AG04450 (cell line): ENCODE measurements at regions of chr1 and their contacts with region 1.

Region 1: DNA sequence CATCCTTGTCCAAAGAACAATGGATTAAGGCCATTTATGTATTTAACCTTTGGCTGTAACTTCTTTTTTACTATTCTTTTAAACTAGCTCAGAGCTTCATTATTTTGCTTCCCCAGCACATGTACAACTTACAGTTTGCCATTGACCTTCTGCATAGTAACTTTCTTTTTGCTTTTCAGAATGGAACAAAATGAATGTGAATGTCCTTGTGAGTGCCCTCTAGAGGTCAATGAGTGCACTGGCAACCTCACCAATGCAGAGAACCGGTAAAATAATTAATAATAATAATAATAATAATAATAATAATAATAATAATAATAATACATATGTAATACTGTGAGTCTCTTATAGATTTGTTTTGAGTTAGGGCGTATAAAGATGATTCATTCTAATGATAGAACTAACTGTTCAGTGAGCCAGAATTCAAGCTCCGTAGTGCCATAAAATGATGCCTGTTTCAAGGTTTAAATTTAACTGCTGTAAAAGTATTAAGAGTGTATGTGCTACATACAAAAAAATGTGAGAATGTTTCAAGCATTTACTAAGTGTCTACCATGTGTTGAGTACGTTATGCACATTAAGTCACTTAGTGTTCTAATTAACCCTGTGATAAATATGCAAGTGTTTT is 69.0 kb upstream of the RAVER2 start:
- DNase-seq: no peak
- H3K4me3 ChIP-seq: no peak overlapping the region
- H3K27ac ChIP-seq: no peak overlapping the region
- H3K27me3 ChIP-seq: no peaks in the 10 kb centered on the region
- CTCF ChIP-seq: peak; percentile 73

Region 2: GRCh38 chr1:64268653-64269557 is 406.9 kb before region 1 on chr1:
- CTCF ChIA-PET with region 1: interaction called, 45 read pairs
- POLR2A ChIA-PET with region 1: no interaction called
- DNase-seq: peak; percentile 65
- H3K4me3 ChIP-seq: no peak overlapping the region
- H3K27ac ChIP-seq: no peak overlapping the region
- H3K27me3 ChIP-seq: peaks cover 6% of the 10 kb centered on the region
- CTCF ChIP-seq: peak; percentile 80

Region 3: DNA sequence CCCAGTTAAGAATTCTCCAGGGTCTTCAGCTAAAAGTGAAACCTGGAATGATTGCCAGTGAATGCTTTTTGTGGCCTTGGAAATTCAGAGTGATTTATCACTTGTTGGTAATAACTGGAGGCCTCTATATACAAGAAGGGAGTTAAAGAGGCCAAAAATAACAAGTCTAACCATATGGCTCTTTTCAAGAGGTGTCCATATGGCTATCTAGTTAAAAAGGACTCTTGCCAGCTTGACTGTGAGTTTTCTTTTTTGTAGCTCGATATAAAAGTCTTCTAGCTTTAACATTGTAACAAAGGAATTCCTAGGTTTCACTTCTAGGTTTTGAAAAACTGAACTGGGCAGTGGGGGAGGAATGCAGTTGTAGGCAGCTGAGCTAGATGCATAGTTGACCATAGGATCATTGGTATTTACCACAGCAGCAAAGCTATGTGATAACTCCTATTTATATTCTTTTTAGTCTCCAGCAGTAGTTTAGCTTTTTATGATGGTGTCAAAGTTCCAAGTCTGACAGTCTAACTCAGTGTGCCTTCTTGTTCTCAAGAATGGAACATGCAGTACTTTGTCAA is 161.6 kb before region 1 on chr1:
- CTCF ChIA-PET with region 1: interaction called, 13 read pairs
- POLR2A ChIA-PET with region 1: no interaction called
- DNase-seq: peak; percentile 74
- H3K4me3 ChIP-seq: no peak overlapping the region
- H3K27ac ChIP-seq: no peak overlapping the region
- H3K27me3 ChIP-seq: no peaks in the 10 kb centered on the region
- CTCF ChIP-seq: no peak

Region 4: DNA sequence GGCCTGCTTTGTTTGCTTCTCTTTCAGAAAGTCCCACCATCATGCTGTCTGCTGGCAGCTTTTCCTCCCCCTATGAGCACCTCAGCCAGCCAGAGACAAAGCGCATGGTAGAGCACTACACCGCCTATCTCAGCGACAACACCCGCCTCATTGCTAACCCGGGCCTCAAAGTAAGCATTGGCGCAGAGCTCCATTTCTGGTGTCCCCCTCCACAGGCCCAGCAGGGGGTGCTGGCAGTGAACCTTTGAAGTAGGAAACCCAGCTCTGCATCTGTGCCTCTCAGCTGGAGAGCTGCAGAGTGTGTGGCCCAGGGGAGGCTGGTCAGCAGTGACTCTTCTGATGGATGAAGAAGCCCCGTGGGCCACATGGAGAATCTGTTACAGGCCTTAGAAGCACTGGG is 12.2 kb before region 1 on chr1:
- CTCF ChIA-PET with region 1: interaction called, 91 read pairs
- POLR2A ChIA-PET with region 1: no interaction called
- DNase-seq: no peak
- H3K4me3 ChIP-seq: no peak overlapping the region
- H3K27ac ChIP-seq: no peak overlapping the region
- H3K27me3 ChIP-seq: no peaks in the 10 kb centered on the region
- CTCF ChIP-seq: peak; percentile 21; the same call in 1 of the 2 replicates

Region 5: GRCh38 chr1:64686828-64687724 is 11.2 kb after region 1 on chr1:
- CTCF ChIA-PET with region 1: interaction called, 42 read pairs
- POLR2A ChIA-PET with region 1: no interaction called
- DNase-seq: peak; percentile 16
- H3K4me3 ChIP-seq: no peak overlapping the region
- H3K27ac ChIP-seq: no peak overlapping the region
- H3K27me3 ChIP-seq: no peaks in the 10 kb centered on the region
- CTCF ChIP-seq: peak; percentile 94

Region 6: DNA sequence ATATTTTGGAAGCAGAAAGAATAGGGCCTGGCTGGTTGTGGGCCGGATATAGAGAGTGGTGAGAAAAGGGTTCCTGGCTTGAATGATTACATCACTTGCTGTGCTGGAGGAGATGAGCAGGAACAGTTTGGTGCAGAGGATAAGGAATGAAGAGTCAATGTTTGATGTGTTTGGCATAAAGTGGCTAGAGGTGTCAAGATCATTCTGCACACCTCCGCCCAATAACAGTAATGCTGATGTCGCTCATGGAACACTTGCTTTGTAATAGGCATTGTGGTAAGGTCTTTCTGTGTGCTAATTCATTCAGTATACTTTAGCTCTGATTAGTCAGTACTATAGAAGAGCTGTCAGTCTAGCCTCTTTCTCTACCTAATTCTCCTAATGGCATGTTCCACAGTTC is 21.0 kb after region 1 on chr1:
- CTCF ChIA-PET with region 1: interaction called, 42 read pairs
- POLR2A ChIA-PET with region 1: no interaction called
- DNase-seq: no peak
- H3K4me3 ChIP-seq: no peak overlapping the region
- H3K27ac ChIP-seq: no peak overlapping the region
- H3K27me3 ChIP-seq: no peaks in the 10 kb centered on the region
- CTCF ChIP-seq: no peak

Region 7: DNA sequence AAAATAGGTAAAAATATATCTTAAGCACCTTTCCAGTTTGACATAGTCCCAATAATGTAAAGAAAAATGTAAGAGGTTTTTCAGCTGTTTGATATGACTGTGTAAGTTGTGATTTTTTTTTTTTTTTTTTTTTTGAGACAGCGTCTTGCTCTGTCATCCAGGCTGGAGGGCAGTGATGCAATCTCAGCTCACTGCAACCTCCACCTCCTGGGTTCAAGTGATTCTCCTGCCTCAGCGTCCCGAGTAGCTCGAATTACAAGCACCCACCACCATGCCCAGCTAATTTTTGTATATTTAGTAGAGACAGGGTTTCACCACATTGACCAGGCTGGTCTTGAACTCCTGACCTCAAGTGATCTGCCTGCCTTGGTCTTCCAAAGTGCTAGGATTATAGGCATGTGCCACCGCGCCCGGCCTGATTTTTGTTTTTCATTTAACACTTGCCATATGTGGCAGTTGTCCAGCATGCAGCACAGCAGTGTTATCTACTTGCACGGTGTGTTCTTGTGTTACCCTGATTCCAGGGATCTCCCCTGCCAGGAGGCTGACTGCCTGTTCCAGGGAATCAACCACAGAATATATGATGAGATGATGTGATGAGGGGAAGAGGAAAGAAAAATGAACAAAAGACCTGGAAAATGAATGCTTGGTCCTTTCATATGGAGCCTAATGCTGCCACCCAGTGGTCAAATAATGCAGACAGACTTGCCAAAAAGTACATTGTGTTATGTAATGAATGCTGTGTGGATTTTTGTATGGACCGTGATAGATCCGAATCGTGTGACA is 148.1 kb after region 1 on chr1:
- CTCF ChIA-PET with region 1: interaction called, 37 read pairs
- POLR2A ChIA-PET with region 1: no interaction called
- DNase-seq: peak; percentile 55
- H3K4me3 ChIP-seq: no peak overlapping the region
- H3K27ac ChIP-seq: no peak overlapping the region
- H3K27me3 ChIP-seq: no peaks in the 10 kb centered on the region
- CTCF ChIP-seq: peak; percentile 79